ENCODE measurements at regions of chr6 and their contacts with region 1.

Region 1: GRCh38 chr6:137951064-137951597 is 84.1 kb downstream of the TNFAIP3 start:
- DNase-seq: peak; percentile 89
- H3K4me3 ChIP-seq: peak overlapping the region; percentile 53
- H3K27ac ChIP-seq: peak overlapping the region; percentile 86
- H3K4me1 ChIP-seq: peaks cover 49% of the 10 kb centered on the region
- CTCF ChIP-seq: peak; percentile 69

Region 2: GRCh38 chr6:137102851-137103492 is 848.2 kb before region 1 on chr6:
- CTCF ChIA-PET with region 1: interaction called, 3 read pairs
- POLR2A ChIA-PET with region 1: no interaction called
- intact Hi-C with region 1: loop called (anchors 5 kb)
- DNase-seq: peak; percentile 96
- H3K4me3 ChIP-seq: peak overlapping the region; percentile 53
- H3K27ac ChIP-seq: peak overlapping the region; percentile 95
- H3K4me1 ChIP-seq: peaks cover 75% of the 10 kb centered on the region
- CTCF ChIP-seq: no peak

Region 3: GRCh38 chr6:137804637-137805036 is 146.5 kb before region 1 on chr6:
- CTCF ChIA-PET with region 1: no interaction called
- POLR2A ChIA-PET with region 1: no interaction called
- intact Hi-C with region 1: no loop called
- DNase-seq: no peak
- H3K4me3 ChIP-seq: no peak overlapping the region
- H3K27ac ChIP-seq: no peak overlapping the region
- H3K4me1 ChIP-seq: no peaks in the 10 kb centered on the region
- CTCF ChIP-seq: no peak

Region 4: DNA sequence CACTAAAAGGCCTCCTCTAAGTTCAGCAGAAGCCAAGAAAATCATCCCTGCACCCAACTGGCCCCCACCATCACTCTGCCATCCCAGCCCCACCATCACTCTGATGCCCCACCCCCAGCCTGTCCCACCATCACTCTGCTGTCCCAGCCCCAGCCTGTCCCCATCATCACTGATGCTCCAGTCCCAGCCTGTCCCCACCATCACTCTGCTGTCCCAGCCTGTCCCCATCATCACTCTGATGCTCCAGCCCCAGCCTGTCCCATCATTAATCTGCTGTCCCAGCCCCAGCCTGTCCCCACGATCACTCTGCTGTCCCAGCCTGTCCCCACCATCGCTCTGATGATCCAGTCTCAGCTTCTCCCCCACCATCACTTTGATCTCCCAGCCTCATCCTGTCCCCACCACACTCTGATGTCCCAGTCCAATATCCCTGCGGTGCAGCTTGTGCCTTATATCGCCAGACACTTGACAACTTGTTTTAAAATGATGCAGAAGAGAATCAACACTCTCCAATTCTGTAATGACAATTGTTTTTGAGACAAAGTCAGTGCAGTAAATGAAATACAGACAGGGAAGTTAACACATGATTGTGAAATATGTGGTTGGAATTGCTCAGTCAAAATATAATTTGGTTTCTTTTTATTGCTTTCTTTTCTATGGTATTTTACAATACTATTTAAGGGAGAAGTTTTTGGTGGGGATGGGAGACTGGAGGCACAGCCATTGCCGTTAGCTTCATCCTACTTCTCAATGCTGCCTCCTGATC is 16.7 kb after region 1 on chr6:
- CTCF ChIA-PET with region 1: interaction called, 11 read pairs
- POLR2A ChIA-PET with region 1: interaction called, 43 read pairs
- intact Hi-C with region 1: loop called (anchors 1 kb)
- DNase-seq: no peak
- H3K4me3 ChIP-seq: no peak overlapping the region
- H3K27ac ChIP-seq: no peak overlapping the region
- H3K4me1 ChIP-seq: peaks cover 64% of the 10 kb centered on the region
- CTCF ChIP-seq: no peak

Region 5: GRCh38 chr6:137975188-137975940 is 24.2 kb after region 1 on chr6:
- CTCF ChIA-PET with region 1: no interaction called
- POLR2A ChIA-PET with region 1: interaction called, 6 read pairs
- intact Hi-C with region 1: loop called (anchors 1 kb)
- DNase-seq: peak; percentile 62
- H3K4me3 ChIP-seq: no peak overlapping the region
- H3K27ac ChIP-seq: no peak overlapping the region
- H3K4me1 ChIP-seq: peaks cover 17% of the 10 kb centered on the region
- CTCF ChIP-seq: peak; percentile 84

Region 6: GRCh38 chr6:138001750-138002349 is 50.7 kb after region 1 on chr6:
- CTCF ChIA-PET with region 1: interaction called, 10 read pairs
- POLR2A ChIA-PET with region 1: interaction called, 4 read pairs
- intact Hi-C with region 1: loop called (anchors 1 kb)
- DNase-seq: peak; percentile 57
- H3K4me3 ChIP-seq: no peak overlapping the region
- H3K27ac ChIP-seq: no peak overlapping the region
- H3K4me1 ChIP-seq: no peaks in the 10 kb centered on the region
- CTCF ChIP-seq: peak; percentile 99

Region 7: GRCh38 chr6:138007014-138007472 is 55.9 kb after region 1 on chr6:
- CTCF ChIA-PET with region 1: interaction called, 10 read pairs
- POLR2A ChIA-PET with region 1: interaction called, 3 read pairs
- intact Hi-C with region 1: loop called (anchors 1 kb)
- DNase-seq: peak; percentile 32
- H3K4me3 ChIP-seq: no peak overlapping the region
- H3K27ac ChIP-seq: no peak overlapping the region
- H3K4me1 ChIP-seq: no peaks in the 10 kb centered on the region
- CTCF ChIP-seq: peak; percentile 92

Region 8: GRCh38 chr6:138219398-138219797 is 268.3 kb after region 1 on chr6:
- CTCF ChIA-PET with region 1: no interaction called
- POLR2A ChIA-PET with region 1: no interaction called
- intact Hi-C with region 1: no loop called
- DNase-seq: no peak
- H3K4me3 ChIP-seq: no peak overlapping the region
- H3K27ac ChIP-seq: no peak overlapping the region
- H3K4me1 ChIP-seq: no peaks in the 10 kb centered on the region
- CTCF ChIP-seq: no peak

Measured in OCI-LY7 (cell line).